Breast epithelium (tissue), 4 donors: ENCODE measurements at regions of chr11 and their contacts with region 1.

Region 1: GRCh38 chr11:42299780-42300179 is 840.3 kb upstream of the LRRC4C start:
- DNase-seq: no peak
- H3K4me3 ChIP-seq: no peak overlapping the region
- H3K27ac ChIP-seq: no peak overlapping the region
- H3K4me1 ChIP-seq: no peaks in the 10 kb centered on the region
- H3K27me3 ChIP-seq: no peaks in the 10 kb centered on the region
- CTCF ChIP-seq: no peak
- POLR2A ChIP-seq: no peak

Region 2: DNA sequence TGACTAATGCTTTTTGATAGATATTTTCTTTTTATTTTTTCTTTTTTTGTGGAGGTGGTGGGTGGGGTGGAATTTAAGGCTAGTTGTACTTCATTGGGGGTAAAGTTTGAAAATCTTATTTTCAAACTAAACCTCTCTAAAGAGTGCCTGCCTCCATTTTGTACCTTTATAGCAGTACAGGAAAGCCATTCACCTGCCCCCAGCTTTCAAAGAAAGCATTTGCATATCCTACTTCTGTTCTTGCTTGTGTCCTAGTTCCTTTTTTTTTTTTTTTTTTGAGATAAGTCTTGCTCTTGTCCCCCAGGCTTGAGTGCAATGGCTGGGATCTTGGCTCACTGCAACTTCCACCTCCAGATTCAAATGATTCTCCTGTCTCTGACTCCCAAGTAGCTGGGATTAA is 74.1 kb before region 1 on chr11:
- intact Hi-C with region 1: no loop called
- DNase-seq: no peak
- H3K4me3 ChIP-seq: no peak overlapping the region
- H3K27ac ChIP-seq: no peak overlapping the region
- H3K4me1 ChIP-seq: no peaks in the 10 kb centered on the region
- H3K27me3 ChIP-seq: no peaks in the 10 kb centered on the region
- CTCF ChIP-seq: no peak
- POLR2A ChIP-seq: no peak

Region 3: DNA sequence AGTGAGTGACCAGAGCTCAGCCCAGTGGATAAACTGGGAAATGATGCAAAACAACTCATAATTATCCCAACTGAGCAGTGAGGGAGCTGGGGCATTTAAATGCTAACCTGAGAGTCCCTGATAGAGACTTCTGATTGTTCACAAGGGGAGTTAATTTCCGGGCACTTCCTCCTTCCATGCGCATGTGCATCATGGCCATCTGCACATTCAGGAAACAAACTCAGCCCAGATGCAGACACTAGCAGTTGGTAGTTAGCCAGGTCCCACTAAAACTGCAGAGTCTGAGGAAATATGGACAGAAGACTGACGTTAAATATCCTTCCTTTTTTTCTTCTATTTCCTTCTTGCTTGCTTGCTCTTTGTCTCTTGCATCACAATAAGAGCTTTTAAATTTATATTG is 11.7 kb after region 1 on chr11:
- intact Hi-C with region 1: no loop called
- DNase-seq: no peak
- H3K4me3 ChIP-seq: no peak overlapping the region
- H3K27ac ChIP-seq: no peak overlapping the region
- H3K4me1 ChIP-seq: no peaks in the 10 kb centered on the region
- H3K27me3 ChIP-seq: no peaks in the 10 kb centered on the region
- CTCF ChIP-seq: no peak
- POLR2A ChIP-seq: no peak

Region 4: DNA sequence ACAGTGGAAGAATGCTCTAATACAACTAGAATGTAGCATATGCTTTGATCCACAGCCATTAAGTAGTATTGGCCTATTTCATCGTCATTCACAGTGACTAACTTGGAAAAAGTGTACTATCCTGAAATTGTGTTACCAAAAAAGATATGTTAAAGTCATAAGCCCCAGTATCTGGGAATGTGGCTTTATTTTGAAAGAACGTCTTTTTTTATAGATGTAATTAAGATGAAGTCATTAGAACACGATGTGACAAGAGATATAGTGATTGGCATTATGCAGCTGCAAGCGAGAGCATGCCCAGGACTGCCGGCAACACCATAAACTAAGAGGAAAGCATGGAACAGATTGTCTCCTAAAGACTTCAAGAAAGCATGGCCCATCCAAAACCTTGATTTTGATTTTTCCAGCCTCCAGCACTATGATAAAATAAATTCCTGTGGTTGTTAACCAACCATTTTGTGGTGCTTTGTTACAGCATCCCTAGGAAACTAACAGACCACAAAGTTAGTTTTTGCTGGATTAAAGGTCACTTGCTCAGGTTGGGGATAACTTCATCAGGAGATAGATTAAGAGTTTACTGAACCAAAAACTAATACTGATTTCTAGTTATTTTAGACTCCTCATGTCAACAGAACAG is 30.3 kb after region 1 on chr11:
- intact Hi-C with region 1: loop called (anchors 1 kb)
- DNase-seq: peak in 1 of 2 donors; percentile 75
- H3K4me3 ChIP-seq: no peak overlapping the region
- H3K27ac ChIP-seq: peak overlapping the region in 1 of 2 donors; percentile 3
- H3K4me1 ChIP-seq: no peaks in the 10 kb centered on the region
- H3K27me3 ChIP-seq: no peaks in the 10 kb centered on the region
- CTCF ChIP-seq: no peak
- POLR2A ChIP-seq: no peak

Region 5: GRCh38 chr11:42344204-42344792 is 44.5 kb after region 1 on chr11:
- intact Hi-C with region 1: no loop called
- DNase-seq: no peak
- H3K4me3 ChIP-seq: no peak overlapping the region
- H3K27ac ChIP-seq: no peak overlapping the region
- H3K4me1 ChIP-seq: no peaks in the 10 kb centered on the region
- H3K27me3 ChIP-seq: no peaks in the 10 kb centered on the region
- CTCF ChIP-seq: no peak
- POLR2A ChIP-seq: no peak

Region 6: GRCh38 chr11:43459246-43459645 is 1159.5 kb after region 1 on chr11:
- intact Hi-C with region 1: no loop called
- DNase-seq: no peak
- H3K4me3 ChIP-seq: no peak overlapping the region
- H3K27ac ChIP-seq: no peak overlapping the region
- H3K4me1 ChIP-seq: no peaks in the 10 kb centered on the region
- H3K27me3 ChIP-seq: no peaks in the 10 kb centered on the region
- CTCF ChIP-seq: no peak
- POLR2A ChIP-seq: no peak